Breast epithelium (tissue), 4 donors: ENCODE measurements at regions of chr4 and their contacts with region 1.

Region 1: DNA sequence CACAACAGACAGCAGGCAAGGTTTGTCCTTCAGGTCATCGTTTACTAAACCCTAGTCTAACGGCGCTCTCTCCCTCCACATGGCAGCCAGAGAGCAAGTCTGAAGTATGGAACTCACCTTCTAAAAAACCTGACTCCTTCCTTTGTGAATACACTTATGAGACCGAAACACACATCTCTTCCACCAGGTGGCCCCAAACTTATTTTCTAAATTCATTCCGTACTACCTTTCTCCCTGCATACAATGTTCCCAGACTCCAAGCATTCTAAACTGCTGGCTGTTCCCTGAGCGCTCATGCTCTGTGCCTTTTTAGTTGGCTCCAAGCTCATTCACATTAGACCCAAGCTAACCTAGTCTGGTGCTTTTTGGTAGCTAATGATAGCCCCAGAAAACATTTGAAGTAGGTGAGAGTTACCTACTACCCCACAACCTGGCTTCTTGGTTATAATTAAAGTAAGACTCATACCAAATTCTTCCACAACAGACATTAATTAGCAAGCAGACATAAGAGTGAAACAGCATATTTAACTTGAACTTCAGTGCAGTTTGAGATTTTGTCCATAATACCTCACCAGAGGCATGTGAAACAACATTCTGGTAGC is 67.6 kb upstream of the DCLK2 start:
- DNase-seq: no peak
- H3K4me3 ChIP-seq: no peak overlapping the region
- H3K27ac ChIP-seq: no peak overlapping the region
- H3K4me1 ChIP-seq: no peaks in the 10 kb centered on the region
- H3K27me3 ChIP-seq: no peaks in the 10 kb centered on the region
- CTCF ChIP-seq: peak; percentile 50 to 59 (median 56)
- POLR2A ChIP-seq: no peak

Region 2: GRCh38 chr4:150038335-150039076 is 27.9 kb after region 1 on chr4:
- intact Hi-C with region 1: no loop called
- DNase-seq: no peak
- H3K4me3 ChIP-seq: no peak overlapping the region
- H3K27ac ChIP-seq: no peak overlapping the region
- H3K4me1 ChIP-seq: no peaks in the 10 kb centered on the region
- H3K27me3 ChIP-seq: no peaks in the 10 kb centered on the region
- CTCF ChIP-seq: no peak
- POLR2A ChIP-seq: no peak

Region 3: GRCh38 chr4:150886599-150886998 is 876.0 kb after region 1 on chr4:
- intact Hi-C with region 1: loop called (anchors 10 kb)
- DNase-seq: no peak
- H3K4me3 ChIP-seq: no peak overlapping the region
- H3K27ac ChIP-seq: no peak overlapping the region
- H3K4me1 ChIP-seq: no peaks in the 10 kb centered on the region
- H3K27me3 ChIP-seq: no peaks in the 10 kb centered on the region
- CTCF ChIP-seq: no peak
- POLR2A ChIP-seq: no peak